Activated T-helper 2 cell treated with anti-CD3 and anti-CD28 coated beads, Interferon-gamma antibody, Interleukin-2, Interleukin-4, amounts not matched to agents 10 μg/mL and 5 μg/mL and 100 μg/mL, durations not matched to agents 14 hours and 24 hours and 36 hours (primary cell): ENCODE measurements at regions of chr9 and their contacts with region 1.

Region 1: GRCh38 chr9:129932303-129933151 is 97.3 kb downstream of the USP20 start:
- DNase-seq: no peak
- H3K4me3 Mint-ChIP-seq: peak overlapping the region; percentile 59
- H3K27ac Mint-ChIP-seq: peak overlapping the region; percentile 86
- H3K4me1 Mint-ChIP-seq: peaks cover 61% of the 10 kb centered on the region
- H3K27me3 Mint-ChIP-seq: no peaks in the 10 kb centered on the region

Region 2: GRCh38 chr9:129962889-129963703 is 30.6 kb after region 1 on chr9:
- intact Hi-C with region 1: loop called (anchors 2 kb)
- DNase-seq: peak; percentile 76
- H3K4me3 Mint-ChIP-seq: peak overlapping the region; percentile 80
- H3K27ac Mint-ChIP-seq: peak overlapping the region; percentile 89
- H3K4me1 Mint-ChIP-seq: peaks cover 67% of the 10 kb centered on the region
- H3K27me3 Mint-ChIP-seq: no peaks in the 10 kb centered on the region